ENCODE measurements at regions of chr3 and their contacts with region 1.

Region 1: DNA sequence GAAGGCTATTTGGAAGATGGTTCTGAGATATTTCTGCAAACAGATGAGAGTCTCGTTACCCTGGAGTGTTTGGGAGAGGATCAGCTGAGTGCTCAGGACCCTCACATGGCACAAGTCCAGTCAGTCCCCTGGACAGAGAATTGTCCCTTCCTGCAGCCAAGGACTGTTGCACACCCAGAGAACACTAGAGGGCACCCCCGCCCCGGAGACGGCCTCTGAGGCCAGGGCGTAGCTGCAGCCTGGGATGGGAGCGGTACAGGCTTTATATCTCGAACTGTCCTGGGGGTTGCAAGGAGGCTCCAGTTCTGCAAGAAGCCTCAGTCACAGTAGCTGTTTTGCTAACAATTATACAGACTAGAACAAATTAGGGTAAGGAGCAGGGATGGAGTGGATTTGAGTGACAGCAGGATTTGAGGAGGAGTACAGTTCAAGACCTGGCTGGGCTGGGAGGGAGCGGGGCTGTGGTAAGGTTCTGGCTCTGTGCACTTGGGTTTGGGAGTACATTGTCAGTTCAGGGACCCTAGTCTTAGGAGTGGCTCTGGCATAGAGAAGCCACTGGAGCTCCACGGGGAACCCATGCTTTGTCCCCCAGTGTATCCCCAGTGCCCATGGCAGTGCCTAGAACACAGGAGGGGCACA is 67.6 kb upstream of the HACD2 start:
- DNase-seq: peak; percentile 80
- H3K4me3 ChIP-seq: no peak overlapping the region
- H3K27ac ChIP-seq: peak overlapping the region; percentile 79
- H3K4me1 ChIP-seq: peaks cover 42% of the 10 kb centered on the region
- H3K27me3 ChIP-seq: no peaks in the 10 kb centered on the region
- CTCF ChIP-seq: peak; percentile 98

Region 2: DNA sequence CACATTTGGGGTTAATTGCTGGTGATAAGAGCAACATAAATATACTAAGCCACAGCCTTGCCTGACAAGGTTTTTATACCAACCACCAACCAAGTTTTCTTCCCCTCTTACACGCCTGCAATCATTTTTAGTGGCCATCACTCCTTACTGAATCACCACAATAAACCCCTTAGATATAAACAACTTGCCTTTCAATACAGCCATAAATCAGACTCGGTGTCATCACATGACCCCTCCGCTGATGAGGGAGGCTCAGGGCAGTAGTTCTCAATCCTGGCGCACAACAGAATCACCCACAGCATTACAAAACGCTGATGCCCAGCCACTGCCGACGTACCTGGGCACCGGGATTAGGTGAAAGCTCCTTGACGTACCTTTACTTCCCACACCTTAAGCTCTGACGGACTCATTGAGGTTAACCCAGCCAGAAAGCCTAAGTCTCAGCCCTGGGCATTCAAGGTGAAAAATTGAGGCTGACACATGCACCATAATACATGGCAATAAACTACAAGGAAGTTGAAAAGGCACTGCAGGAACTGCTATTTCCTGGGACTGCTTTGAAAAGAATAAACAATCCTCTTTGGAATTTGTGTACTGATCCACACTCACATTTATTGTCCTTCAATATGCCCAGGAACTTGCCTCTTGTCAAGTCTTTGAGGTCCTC is 220.7 kb before region 1 on chr3:
- intact Hi-C with region 1: no loop called
- DNase-seq: no peak
- H3K4me3 ChIP-seq: no peak overlapping the region
- H3K27ac ChIP-seq: peak overlapping the region; percentile 89
- H3K4me1 ChIP-seq: peaks cover 90% of the 10 kb centered on the region
- H3K27me3 ChIP-seq: no peaks in the 10 kb centered on the region
- CTCF ChIP-seq: no peak

Region 3: DNA sequence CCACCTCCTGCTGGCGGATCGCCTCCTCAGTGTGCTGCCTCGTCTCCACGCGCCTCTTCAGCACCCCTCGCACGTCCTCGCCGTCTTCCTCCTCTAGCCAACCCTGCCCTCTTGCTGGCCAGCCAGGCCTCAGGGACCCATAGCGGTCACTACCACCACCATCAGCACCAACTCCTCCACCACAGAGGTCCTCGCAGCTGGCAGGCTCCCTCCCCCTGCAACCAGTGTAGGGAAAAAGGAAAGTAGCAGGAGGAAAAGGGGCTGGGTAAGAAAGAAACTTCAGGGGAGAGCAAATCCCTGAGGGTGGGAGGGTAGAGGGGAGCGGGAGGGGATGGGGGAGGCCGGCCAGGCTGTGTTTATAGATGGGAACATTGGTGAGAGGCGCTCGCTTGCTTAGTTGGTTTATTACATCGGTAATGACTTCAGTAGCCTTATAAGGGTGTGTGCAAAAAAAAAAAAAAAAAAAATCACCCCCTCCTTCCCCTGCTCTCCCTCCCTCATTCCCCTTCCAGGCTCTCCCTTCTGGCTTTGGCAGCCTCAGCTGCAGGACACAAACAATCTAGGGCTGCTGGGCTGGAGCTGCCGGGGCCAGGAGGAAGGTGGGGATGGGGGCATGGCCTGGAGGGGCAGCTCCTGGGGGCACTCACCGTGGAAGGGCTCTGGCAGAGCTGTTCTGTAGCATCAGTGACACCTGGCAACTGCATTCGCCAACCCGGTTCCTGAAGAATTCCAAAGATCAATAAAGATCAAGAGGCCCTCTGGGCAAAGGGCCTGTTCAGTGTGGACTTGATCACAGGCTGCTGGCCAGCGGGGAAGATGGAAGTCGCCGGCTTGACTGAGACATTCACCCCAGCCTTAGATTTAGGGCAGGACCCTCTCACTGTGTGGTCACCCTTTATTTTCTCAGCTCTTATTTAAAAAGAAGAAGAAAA is 48.6 kb after region 1 on chr3:
- intact Hi-C with region 1: loop called (anchors 5 kb)
- DNase-seq: no peak
- H3K4me3 ChIP-seq: peak overlapping the region; percentile 56
- H3K27ac ChIP-seq: peak overlapping the region; percentile 83
- H3K4me1 ChIP-seq: peaks cover 24% of the 10 kb centered on the region
- H3K27me3 ChIP-seq: no peaks in the 10 kb centered on the region
- CTCF ChIP-seq: no peak

Region 4: GRCh38 chr3:123723522-123724168 is 71.2 kb after region 1 on chr3:
- intact Hi-C with region 1: loop called (anchors 5 kb)
- DNase-seq: no peak
- H3K4me3 ChIP-seq: no peak overlapping the region
- H3K27ac ChIP-seq: no peak overlapping the region
- H3K4me1 ChIP-seq: peaks cover 35% of the 10 kb centered on the region
- H3K27me3 ChIP-seq: no peaks in the 10 kb centered on the region
- CTCF ChIP-seq: peak; percentile 85

Measured in left ventricle myocardium inferior (tissue), 1 donor.